ENCODE measurements at regions of chr3 and their contacts with region 1.

Region 1: GRCh38 chr3:32667122-32667521 is 17.9 kb upstream of the CNOT10 start:
- DNase-seq: no peak
- ATAC-seq: no peak

Region 2: GRCh38 chr3:31810991-31811433 is 856.1 kb before region 1 on chr3:
- intact Hi-C with region 1: no loop called
- DNase-seq: no peak
- ATAC-seq: no peak

Region 3: DNA sequence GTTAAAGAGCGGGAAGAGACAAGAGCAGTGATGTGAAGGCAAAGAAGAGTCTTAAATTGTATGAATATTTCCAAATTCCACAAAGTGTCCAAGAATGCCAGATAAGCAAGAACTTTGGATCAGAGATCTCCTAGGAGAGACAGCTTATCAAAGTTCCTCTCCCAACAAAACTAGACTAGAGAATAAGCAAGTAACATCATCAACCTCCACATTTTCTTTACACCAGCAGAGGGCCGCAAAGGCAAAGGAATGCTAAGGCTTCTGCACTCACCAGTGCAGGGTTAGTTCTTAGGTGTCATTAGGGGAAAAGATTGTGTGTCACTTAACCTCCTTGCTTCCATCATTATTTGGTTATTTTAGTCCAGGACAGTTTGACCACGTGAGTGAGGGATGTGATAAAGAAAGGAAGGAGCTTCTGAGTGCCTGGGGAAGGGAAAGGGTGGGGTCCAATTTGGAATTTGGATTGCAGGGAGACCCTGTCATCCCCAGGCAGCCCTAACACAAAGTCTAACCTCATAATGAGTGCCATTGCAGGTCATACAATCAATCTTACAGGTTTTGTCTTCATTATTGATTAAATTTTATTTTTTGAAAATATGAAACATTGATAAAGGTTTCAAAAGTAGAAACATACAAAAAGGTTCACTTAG is 156.9 kb before region 1 on chr3:
- intact Hi-C with region 1: loop called (anchors 1 kb)
- DNase-seq: peak; percentile 69
- ATAC-seq: peak; percentile 94

Region 4: GRCh38 chr3:32596909-32597369 is 70.2 kb before region 1 on chr3:
- intact Hi-C with region 1: loop called (anchors 5 kb)
- DNase-seq: no peak
- ATAC-seq: peak; percentile 65

Region 5: GRCh38 chr3:33167716-33168336 is 500.7 kb after region 1 on chr3:
- intact Hi-C with region 1: no loop called
- DNase-seq: no peak
- ATAC-seq: no peak